SK-N-SH (cell line): ENCODE measurements at regions of chr20 and their contacts with region 1.

Region 1: GRCh38 chr20:31723319-31724078 is 831 bp upstream of the BCL2L1 start:
- DNase-seq: peak; percentile 99
- H3K4me3 ChIP-seq: peak overlapping the region; percentile 59 to 81
- H3K27ac ChIP-seq: peak overlapping the region; percentile 98 to 100
- H3K4me1 ChIP-seq: peaks cover 18 to 35% of the 10 kb centered on the region in 2 experiments
- H3K27me3 ChIP-seq: no peaks in the 10 kb centered on the region
- CTCF ChIP-seq: peak; percentile 94
- EP300 ChIP-seq: no peak
- RAD21 ChIP-seq: peak; percentile 94

Region 2: GRCh38 chr20:31572701-31573554 is 150.6 kb before region 1 on chr20:
- CTCF ChIA-PET with region 1: interaction called, 26 read pairs
- POLR2A ChIA-PET with region 1: interaction called, 5 read pairs
- DNase-seq: peak; percentile 93
- H3K4me3 ChIP-seq: peak overlapping the region; percentile 52 to 59
- H3K27ac ChIP-seq: peak overlapping the region; percentile 93 to 97
- H3K4me1 ChIP-seq: peaks cover 45 to 48% of the 10 kb centered on the region in 2 experiments
- H3K27me3 ChIP-seq: no peaks in the 10 kb centered on the region
- CTCF ChIP-seq: no peak
- EP300 ChIP-seq: peak; percentile 63 to 94
- RAD21 ChIP-seq: no peak; the same call in 1 of the 2 replicates

Region 3: GRCh38 chr20:31637660-31638059 is 85.8 kb before region 1 on chr20 and contains the start of gene COX4I2:
- CTCF ChIA-PET with region 1: interaction called, 84 read pairs
- POLR2A ChIA-PET with region 1: interaction called, 12 read pairs
- DNase-seq: peak; percentile 61
- H3K4me3 ChIP-seq: no peak within 1 kb of the TSS
- H3K27ac ChIP-seq: peak within 1 kb of the TSS in 1 of 2 experiments; percentile 88; a peak in 2 of 4 replicates
- H3K4me1 ChIP-seq: peaks cover 0 to 31% of the 10 kb centered on the region in 2 experiments; a peak in 2 of 4 replicates
- H3K27me3 ChIP-seq: no peaks in the 10 kb centered on the region
- CTCF ChIP-seq: no peak
- EP300 ChIP-seq: no peak
- RAD21 ChIP-seq: no peak
- polyA plus RNA-seq, gene COX4I2: 0.21 TPM in 1 of 2 replicates, not detected in the other

Region 4: DNA sequence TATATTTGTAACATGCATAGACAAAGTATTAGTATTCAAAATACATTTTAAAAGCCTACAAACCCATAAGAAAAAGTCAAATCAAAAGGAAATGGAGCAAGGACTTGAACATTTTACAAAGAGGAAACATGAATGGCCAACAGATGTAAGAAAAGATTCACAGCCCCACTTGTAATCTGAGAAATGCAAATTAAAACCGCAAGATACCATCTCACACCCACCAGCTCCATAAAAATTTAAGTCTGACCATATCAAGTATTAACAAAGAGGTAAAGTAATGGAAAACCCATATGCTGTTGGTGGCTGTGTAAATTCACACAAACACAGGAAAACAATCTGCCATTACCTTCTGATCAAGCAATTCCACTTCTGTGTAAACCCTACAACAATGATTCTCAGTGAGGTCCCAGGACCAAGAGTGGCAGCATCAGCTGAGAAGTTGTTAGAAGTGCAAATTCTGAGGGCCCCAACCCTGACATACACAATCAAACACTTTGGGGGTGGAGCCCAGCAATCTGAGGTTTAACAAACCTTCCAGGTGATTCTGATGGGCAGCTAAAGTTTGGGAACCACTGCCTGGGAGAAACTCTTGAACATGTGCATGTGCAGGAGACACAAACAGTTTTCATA is 31.7 kb before region 1 on chr20:
- CTCF ChIA-PET with region 1: interaction called, 12 read pairs
- POLR2A ChIA-PET with region 1: no interaction called
- DNase-seq: no peak
- H3K4me3 ChIP-seq: no peak overlapping the region
- H3K27ac ChIP-seq: peak overlapping the region; percentile 18 to 53
- H3K4me1 ChIP-seq: peaks cover 0 to 43% of the 10 kb centered on the region in 2 experiments; a peak in 3 of 4 replicates
- H3K27me3 ChIP-seq: no peaks in the 10 kb centered on the region
- CTCF ChIP-seq: no peak
- EP300 ChIP-seq: no peak
- RAD21 ChIP-seq: no peak

Region 5: GRCh38 chr20:31738729-31739561 is 15.4 kb after region 1 on chr20 and contains the start of gene TPX2:
- CTCF ChIA-PET with region 1: interaction called, 35 read pairs
- POLR2A ChIA-PET with region 1: interaction called, 11 read pairs
- DNase-seq: peak; percentile 96
- H3K4me3 ChIP-seq: peak within 1 kb of the TSS; percentile 68 to 92
- H3K27ac ChIP-seq: peak within 1 kb of the TSS; percentile 86 to 92
- H3K4me1 ChIP-seq: peaks cover 3 to 8% of the 10 kb centered on the region in 2 experiments; a peak in 3 of 4 replicates
- H3K27me3 ChIP-seq: no peaks in the 10 kb centered on the region
- CTCF ChIP-seq: peak; percentile 24; the same call in 1 of the 2 replicates
- EP300 ChIP-seq: no peak
- RAD21 ChIP-seq: no peak
- polyA plus RNA-seq, gene TPX2: 14.4 and 17.1 TPM in 2 replicates